Caco-2 (cell line): ENCODE measurements at regions of chr2 and their contacts with region 1.

Region 1: DNA sequence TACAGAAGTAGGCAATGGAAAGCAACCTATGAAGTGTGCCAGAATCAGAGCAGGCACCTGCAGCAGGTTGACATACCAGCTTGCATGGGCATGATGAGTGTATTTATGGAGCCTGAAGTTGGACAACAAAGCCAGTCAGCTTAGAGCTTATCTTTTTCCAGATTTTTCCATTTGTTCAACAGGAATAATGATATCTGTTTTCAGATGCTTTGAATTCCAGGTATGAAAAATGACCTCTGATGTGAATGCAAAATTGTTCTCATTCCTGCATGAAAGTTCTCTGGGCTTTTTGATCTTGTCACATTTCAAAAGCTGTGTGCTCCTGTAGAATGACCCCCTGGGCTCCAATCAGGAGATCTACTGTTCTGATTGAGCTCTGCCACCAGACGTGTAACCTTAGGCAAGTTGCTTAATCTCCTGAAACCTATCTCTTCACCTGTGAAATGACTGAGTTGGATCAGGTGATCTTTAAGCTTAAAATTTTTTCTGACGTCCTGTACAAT is 38.2 kb upstream of the VIT start:
- DNase-seq: peak; percentile 84 to 91
- H3K4me3 ChIP-seq: no peak overlapping the region
- H3K4me3 Mint-ChIP-seq: peak overlapping the region; percentile 4
- H3K27ac Mint-ChIP-seq: peak overlapping the region; percentile 65
- H3K4me1 ChIP-seq: peaks cover 52% of the 10 kb centered on the region
- H3K4me1 Mint-ChIP-seq: peaks cover 26% of the 10 kb centered on the region
- H3K27me3 ChIP-seq: no peaks in the 10 kb centered on the region
- H3K27me3 Mint-ChIP-seq: no peaks in the 10 kb centered on the region
- CTCF ChIP-seq: no peak

Region 2: GRCh38 chr2:36502081-36502480 is 156.2 kb before region 1 on chr2:
- CTCF ChIA-PET with region 1: no interaction called
- POLR2A ChIA-PET with region 1: no interaction called
- intact Hi-C with region 1: loop called (anchors 1 kb)
- DNase-seq: peak; percentile 83 to 87
- H3K4me3 ChIP-seq: no peak overlapping the region
- H3K4me3 Mint-ChIP-seq: peak overlapping the region; percentile 58
- H3K27ac Mint-ChIP-seq: peak overlapping the region; percentile 83
- H3K4me1 ChIP-seq: peaks cover 87% of the 10 kb centered on the region
- H3K4me1 Mint-ChIP-seq: peaks cover 67% of the 10 kb centered on the region
- H3K27me3 ChIP-seq: no peaks in the 10 kb centered on the region
- H3K27me3 Mint-ChIP-seq: no peaks in the 10 kb centered on the region
- CTCF ChIP-seq: no peak

Region 3: GRCh38 chr2:36561237-36561944 is 96.9 kb before region 1 on chr2:
- CTCF ChIA-PET with region 1: no interaction called
- POLR2A ChIA-PET with region 1: interaction called, 3 read pairs
- intact Hi-C with region 1: loop called (anchors 1 kb)
- DNase-seq: peak in 1 of 2 experiments; percentile 54
- H3K4me3 ChIP-seq: no peak overlapping the region
- H3K4me3 Mint-ChIP-seq: peak overlapping the region; percentile 35
- H3K27ac Mint-ChIP-seq: peak overlapping the region; percentile 89
- H3K4me1 ChIP-seq: peaks cover 54% of the 10 kb centered on the region
- H3K4me1 Mint-ChIP-seq: peaks cover 38% of the 10 kb centered on the region
- H3K27me3 ChIP-seq: no peaks in the 10 kb centered on the region
- H3K27me3 Mint-ChIP-seq: no peaks in the 10 kb centered on the region
- CTCF ChIP-seq: no peak

Region 4: GRCh38 chr2:36701391-36701795 is 43.1 kb after region 1 on chr2:
- CTCF ChIA-PET with region 1: interaction called, 3 read pairs
- POLR2A ChIA-PET with region 1: no interaction called
- intact Hi-C with region 1: loop called (anchors 1 kb)
- DNase-seq: peak; percentile 77 to 86
- H3K4me3 ChIP-seq: no peak overlapping the region
- H3K4me3 Mint-ChIP-seq: peak overlapping the region; percentile 42
- H3K27ac Mint-ChIP-seq: peak overlapping the region; percentile 42
- H3K4me1 ChIP-seq: peaks cover 42% of the 10 kb centered on the region
- H3K4me1 Mint-ChIP-seq: peaks cover 21% of the 10 kb centered on the region
- H3K27me3 ChIP-seq: no peaks in the 10 kb centered on the region
- H3K27me3 Mint-ChIP-seq: no peaks in the 10 kb centered on the region
- CTCF ChIP-seq: peak; percentile 35 to 50